ENCODE measurements at regions of chr10 and their contacts with region 1.

Region 1: DNA sequence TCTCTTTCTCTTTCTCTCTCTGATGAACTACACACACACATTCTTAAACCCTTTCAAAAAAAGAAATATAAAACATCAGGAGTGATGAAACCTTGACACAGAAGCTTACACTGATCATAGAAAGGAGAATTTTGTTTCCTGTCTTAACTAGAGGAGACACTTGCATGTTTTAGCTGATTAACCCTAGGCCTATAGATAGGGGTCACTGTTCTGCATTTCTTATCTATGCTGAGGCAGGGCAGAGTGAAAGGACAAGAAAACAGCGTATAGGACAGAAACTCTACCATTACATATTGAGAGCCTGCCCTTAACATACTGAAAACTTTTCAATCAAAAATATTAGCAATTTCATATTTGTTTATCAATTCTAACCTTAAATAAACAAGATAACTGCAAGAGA is 680.6 kb upstream of the MBL2 start:
- DNase-seq: peak in 1 of 2 experiments; percentile 20
- H3K4me3 ChIP-seq: no peak overlapping the region
- H3K4me3 Mint-ChIP-seq: no peak overlapping the region
- H3K27ac Mint-ChIP-seq: no peak overlapping the region
- H3K4me1 ChIP-seq: no peaks in the 10 kb centered on the region
- H3K4me1 Mint-ChIP-seq: no peaks in the 10 kb centered on the region
- H3K27me3 ChIP-seq: no peaks in the 10 kb centered on the region
- H3K27me3 Mint-ChIP-seq: no peaks in the 10 kb centered on the region
- CTCF ChIP-seq: peak; percentile 59 to 64

Region 2: DNA sequence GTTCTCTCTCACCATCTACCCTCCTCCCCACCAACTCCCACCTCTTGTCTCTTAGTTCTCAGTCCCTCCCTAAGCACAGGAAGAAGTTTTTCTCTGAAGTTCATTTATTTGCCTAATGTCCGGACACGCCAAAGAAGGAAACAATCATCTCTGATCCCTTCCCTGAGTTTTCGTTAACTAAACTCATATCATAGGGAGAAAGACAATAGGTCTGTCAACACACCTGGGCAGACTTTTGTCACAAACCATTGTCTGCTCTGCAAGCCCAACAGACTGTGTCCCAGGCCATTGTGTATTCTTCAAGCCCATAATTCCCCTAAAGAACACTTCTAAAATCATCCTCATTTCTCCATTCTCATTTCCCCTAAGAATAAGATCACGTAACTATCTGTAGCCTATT is 10.3 kb after region 1 on chr10:
- CTCF ChIA-PET with region 1: no interaction called
- POLR2A ChIA-PET with region 1: no interaction called
- intact Hi-C with region 1: no loop called
- DNase-seq: no peak
- H3K4me3 ChIP-seq: no peak overlapping the region
- H3K4me3 Mint-ChIP-seq: no peak overlapping the region
- H3K27ac Mint-ChIP-seq: no peak overlapping the region
- H3K4me1 ChIP-seq: no peaks in the 10 kb centered on the region
- H3K4me1 Mint-ChIP-seq: no peaks in the 10 kb centered on the region
- H3K27me3 ChIP-seq: no peaks in the 10 kb centered on the region
- H3K27me3 Mint-ChIP-seq: peaks cover 4% of the 10 kb centered on the region
- CTCF ChIP-seq: no peak

Region 3: DNA sequence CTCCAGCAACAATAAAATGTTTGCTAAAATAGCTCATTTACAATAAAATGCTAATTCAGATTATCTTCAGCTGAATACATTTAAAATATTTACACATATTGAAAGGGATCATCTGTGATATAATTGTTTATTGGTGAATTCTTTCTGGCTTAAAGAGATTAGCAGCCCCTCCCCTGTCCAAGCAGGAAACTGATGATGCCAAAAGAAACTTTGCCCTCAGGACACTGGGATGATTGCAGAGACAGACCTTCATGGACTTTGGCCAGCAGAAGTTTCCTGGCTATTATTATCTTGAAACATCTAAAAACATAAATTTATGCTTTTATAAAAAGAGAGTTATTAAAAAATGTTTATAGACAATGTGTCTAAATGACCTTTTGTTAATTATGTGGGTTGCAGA is 84.3 kb after region 1 on chr10:
- CTCF ChIA-PET with region 1: no interaction called
- POLR2A ChIA-PET with region 1: no interaction called
- intact Hi-C with region 1: loop called (anchors 5 kb)
- DNase-seq: peak in 1 of 2 experiments; percentile 33
- H3K4me3 ChIP-seq: no peak overlapping the region
- H3K4me3 Mint-ChIP-seq: no peak overlapping the region
- H3K27ac Mint-ChIP-seq: no peak overlapping the region
- H3K4me1 ChIP-seq: peaks cover 3% of the 10 kb centered on the region; the same call in 1 of the 2 replicates
- H3K4me1 Mint-ChIP-seq: peaks cover 7% of the 10 kb centered on the region
- H3K27me3 ChIP-seq: no peaks in the 10 kb centered on the region
- H3K27me3 Mint-ChIP-seq: peaks cover 2% of the 10 kb centered on the region
- CTCF ChIP-seq: no peak